Left colon (tissue), 2 donors: ENCODE measurements at regions of chr16 and their contacts with region 1.

Region 1: DNA sequence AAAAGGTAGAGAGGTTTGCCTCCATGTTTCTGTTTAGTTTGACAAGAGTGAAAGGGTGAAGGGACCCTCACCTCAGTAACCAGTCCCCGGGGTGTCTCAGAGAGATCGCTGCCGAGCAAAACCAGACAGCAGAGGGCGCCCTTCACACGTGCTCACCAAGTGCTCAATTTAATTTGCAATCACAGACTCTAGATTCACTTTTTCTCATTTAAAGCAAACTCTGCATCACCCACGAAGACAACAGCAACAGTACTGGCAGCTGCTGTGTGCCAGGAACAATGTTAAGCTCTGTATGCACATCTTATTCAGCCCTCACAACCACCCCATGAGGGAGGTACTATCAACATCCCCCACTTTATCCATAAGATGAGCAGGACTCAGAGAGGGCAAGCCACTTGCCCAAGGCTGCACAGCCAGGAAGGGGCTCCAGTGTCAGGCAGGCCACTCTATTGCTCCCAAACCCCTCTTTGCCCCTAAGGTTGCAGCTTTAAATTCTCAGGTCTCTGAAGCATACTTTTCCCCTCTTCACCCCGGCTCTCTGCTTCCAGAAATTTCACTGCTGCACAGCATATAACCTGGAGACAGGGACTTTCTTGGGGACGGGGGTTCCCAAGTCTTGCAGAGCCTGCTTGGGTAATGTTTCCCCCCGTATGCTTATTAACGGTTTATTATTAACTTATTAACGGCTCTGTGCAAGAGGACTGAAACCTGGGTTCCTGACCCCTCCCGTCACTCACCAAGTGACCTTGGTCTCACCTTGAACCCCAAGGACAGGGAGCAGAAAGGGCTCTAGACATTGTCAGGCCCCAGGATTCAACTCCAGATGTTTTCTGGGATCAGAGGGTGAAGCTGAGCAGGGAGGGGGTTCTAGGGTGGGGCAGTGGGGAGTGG is 70.9 kb downstream of the CNGB1 start:
- DNase-seq: peak; percentile 52 to 85
- ATAC-seq: peak; percentile 67

Region 2: DNA sequence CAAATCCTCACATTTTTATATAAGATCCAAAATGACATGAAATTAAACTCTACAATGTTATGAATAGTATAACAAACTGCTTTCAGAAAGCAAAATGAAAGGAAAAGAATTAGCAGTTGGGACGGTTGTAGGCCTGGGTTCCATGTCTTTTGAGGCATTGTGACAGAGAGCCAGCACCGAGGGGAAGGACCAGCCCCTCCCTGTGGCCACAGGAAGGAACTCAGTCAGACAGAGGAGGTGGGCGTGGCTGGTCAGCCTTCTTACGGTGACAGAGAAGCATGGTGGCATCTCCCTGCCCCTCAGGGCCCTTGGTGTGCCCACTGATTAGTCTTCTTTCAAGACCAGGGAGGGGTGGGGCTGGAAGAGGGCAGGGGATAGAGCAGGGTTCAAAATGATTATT is 94.8 kb after region 1 on chr16:
- intact Hi-C with region 1: loop called in 1 of 2 experiments (anchors 10 kb)
- DNase-seq: peak; percentile 45 to 67
- ATAC-seq: peak; percentile 76

Region 3: GRCh38 chr16:58000706-58001676 is 101.0 kb after region 1 on chr16 and contains the start of gene USB1:
- intact Hi-C with region 1: loop called (anchors 5 to 10 kb)
- DNase-seq: peak; percentile 81 to 90
- ATAC-seq: peak; percentile 90
- total RNA-seq, gene USB1: 42.6 to 43.8 TPM